Ovary (tissue), 10 donors: ENCODE measurements at regions of chr10 and their contacts with region 1.

Region 1: GRCh38 chr10:74738985-74739567 is 87.3 kb upstream of the KAT6B start:
- DNase-seq: no peak
- H3K4me3 ChIP-seq: no peak overlapping the region
- H3K27ac ChIP-seq: no peak overlapping the region
- H3K4me1 ChIP-seq: peaks cover 3% of the 10 kb centered on the region
- H3K27me3 ChIP-seq: no peaks in the 10 kb centered on the region
- CTCF ChIP-seq: no peak
- EP300 ChIP-seq: no peak
- POLR2A ChIP-seq: no peak

Region 2: DNA sequence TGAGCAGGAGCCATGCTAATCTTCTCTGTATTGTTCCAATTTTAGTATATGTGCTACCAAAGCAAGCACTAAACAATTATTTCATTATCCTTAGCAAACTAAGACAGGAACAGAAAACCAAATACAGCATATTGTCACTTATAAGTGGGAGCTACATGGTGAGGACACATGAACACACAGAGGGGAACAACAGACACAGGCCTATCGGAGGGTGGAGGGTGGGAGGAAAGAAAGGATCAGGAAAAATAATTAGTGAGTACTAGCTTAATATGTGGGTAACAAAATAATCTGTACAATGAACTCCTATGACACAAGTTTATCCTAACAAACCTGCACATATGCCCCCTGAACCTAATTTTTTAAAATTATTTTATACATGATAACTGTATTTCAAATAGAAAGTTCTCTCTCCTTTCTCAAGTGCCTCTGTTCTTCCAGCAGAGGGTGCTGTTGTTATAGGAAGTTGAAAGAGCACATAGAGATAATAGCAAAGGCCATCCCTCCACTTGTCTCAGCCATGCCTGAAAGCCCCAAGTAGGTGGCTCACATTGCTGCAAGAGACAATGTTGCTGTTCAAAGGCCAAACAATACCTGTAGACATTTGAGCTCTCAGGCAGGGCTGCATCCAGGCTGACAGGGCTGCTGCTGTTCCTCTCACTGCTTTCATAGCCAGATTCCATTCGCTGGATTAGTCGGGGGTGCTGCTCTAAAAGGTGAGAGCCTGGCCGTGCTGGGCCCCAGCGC is 1209.8 kb before region 1 on chr10:
- intact Hi-C with region 1: no loop called
- DNase-seq: peak in 4 of 5 donors; percentile 34 to 54 (median 42)
- H3K4me3 ChIP-seq: no peak overlapping the region
- H3K27ac ChIP-seq: no peak overlapping the region
- H3K4me1 ChIP-seq: no peaks in the 10 kb centered on the region
- H3K27me3 ChIP-seq: no peaks in the 10 kb centered on the region
- CTCF ChIP-seq: peak; percentile 80 to 86 (median 86)
- EP300 ChIP-seq: no peak
- POLR2A ChIP-seq: no peak

Region 3: DNA sequence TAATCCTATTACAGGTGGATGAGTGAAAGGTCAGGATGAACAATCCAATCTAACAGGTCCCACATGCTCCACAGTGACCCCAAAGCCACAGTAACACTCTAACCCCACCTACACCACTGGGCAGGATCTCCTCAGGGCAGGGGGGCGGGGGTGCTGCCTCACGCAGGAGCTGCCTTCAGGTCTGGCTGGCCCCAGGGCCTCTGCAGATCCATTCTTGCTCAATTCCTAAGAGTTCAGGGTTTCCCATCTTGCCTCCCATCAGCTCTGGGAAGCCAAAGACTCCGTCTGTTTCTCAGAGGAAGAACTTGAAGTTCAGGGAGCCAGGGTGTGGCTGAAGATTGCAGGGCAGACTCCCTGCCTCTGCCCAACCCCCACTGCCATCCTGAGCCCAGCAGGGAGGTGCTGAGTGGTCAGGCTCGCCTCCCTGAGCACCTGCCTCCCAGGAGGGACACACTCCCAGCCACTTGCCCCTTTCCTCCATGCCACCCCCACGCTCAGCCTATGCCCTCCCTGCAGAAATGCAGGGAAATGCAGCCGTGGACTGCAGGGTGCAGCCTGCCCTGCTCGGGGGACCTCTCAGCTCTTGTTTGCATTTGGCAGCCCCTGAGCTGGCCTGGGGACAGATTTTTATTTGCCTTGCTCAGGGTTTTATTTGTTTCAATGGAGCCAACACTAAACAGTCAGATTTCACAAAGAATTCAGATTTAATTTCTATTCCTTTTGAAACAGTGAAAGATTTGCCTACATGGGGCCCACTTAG is 506.6 kb after region 1 on chr10:
- intact Hi-C with region 1: loop called in 1 of 4 experiments (anchors 10 kb)
- DNase-seq: no peak
- H3K4me3 ChIP-seq: no peak overlapping the region
- H3K27ac ChIP-seq: no peak overlapping the region
- H3K4me1 ChIP-seq: no peaks in the 10 kb centered on the region
- H3K27me3 ChIP-seq: no peaks in the 10 kb centered on the region
- CTCF ChIP-seq: no peak
- EP300 ChIP-seq: no peak
- POLR2A ChIP-seq: no peak